Activated T-helper 2 cell treated with anti-CD3 and anti-CD28 coated beads, Interferon-gamma antibody, Interleukin-2, Interleukin-4, amounts not matched to agents 10 μg/mL and 5 μg/mL and 100 μg/mL, durations not matched to agents 14 hours and 24 hours and 36 hours (primary cell): ENCODE measurements at regions of chr1 and their contacts with region 1.

Region 1: DNA sequence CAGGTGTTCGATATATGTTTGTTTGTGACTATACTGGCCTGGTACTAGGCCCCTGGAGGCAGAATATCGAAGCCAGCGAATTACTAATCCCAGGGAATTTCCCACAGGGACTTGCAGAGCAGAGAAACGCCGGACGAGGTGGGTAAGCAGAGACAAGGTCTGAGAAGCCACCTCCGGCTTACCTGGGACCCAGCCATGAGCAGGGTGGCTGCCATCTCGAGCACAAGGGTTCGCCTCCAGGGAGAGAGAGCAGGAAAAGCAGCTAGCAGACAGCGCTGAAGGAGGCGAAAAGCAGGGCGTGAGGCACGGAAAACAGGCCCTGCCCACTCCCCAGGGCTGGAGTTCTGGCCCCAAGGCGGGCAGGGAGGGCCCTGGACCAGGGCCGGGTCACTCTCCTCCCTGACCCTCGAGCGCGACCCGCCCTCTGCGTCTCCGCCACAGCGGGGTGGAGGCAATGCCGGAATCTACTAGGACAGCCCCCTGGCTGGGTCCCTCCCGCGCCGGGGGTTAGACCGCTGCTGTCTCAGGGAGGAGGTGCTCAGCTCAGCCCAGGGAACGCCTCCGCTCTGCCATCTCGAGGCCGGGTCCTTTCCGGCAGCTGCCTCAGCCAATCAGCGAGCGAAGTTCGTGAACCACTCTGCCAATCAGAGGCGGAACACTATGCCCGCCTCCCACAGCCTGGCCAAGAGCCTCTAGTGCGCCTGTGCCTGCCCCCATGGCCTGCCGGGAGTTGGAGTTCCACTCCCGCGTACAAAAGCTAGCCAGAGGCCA is 1.7 kb downstream of the ZNF436 start:
- DNase-seq: peak; percentile 99
- H3K4me3 Mint-ChIP-seq: peak overlapping the region; percentile 94
- H3K27ac Mint-ChIP-seq: peak overlapping the region; percentile 97
- H3K4me1 Mint-ChIP-seq: peaks cover 28% of the 10 kb centered on the region
- H3K27me3 Mint-ChIP-seq: no peaks in the 10 kb centered on the region

Region 2: GRCh38 chr1:23344111-23344986 is 23.6 kb before region 1 on chr1 and contains the start of gene HNRNPR:
- intact Hi-C with region 1: loop called (anchors 1 kb)
- DNase-seq: peak; percentile 99
- H3K4me3 Mint-ChIP-seq: peak within 1 kb of the TSS; percentile 92
- H3K27ac Mint-ChIP-seq: peak within 1 kb of the TSS; percentile 97
- H3K4me1 Mint-ChIP-seq: peaks cover 36% of the 10 kb centered on the region
- H3K27me3 Mint-ChIP-seq: no peaks in the 10 kb centered on the region
- total RNA-seq, gene HNRNPR: 231 and 237 TPM in 2 replicates

Region 3: GRCh38 chr1:23691499-23692307 is 323.7 kb after region 1 on chr1 and contains the start of gene RPL11:
- intact Hi-C with region 1: loop called (anchors 1 kb)
- DNase-seq: peak; percentile 83
- H3K4me3 Mint-ChIP-seq: peak within 1 kb of the TSS; percentile 93
- H3K27ac Mint-ChIP-seq: peak within 1 kb of the TSS; percentile 90
- H3K4me1 Mint-ChIP-seq: peaks cover 38% of the 10 kb centered on the region
- H3K27me3 Mint-ChIP-seq: no peaks in the 10 kb centered on the region
- total RNA-seq, gene RPL11: 1,169 and 1,221 TPM in 2 replicates